ENCODE measurements at regions of chr6 and their contacts with region 1.

Region 1: DNA sequence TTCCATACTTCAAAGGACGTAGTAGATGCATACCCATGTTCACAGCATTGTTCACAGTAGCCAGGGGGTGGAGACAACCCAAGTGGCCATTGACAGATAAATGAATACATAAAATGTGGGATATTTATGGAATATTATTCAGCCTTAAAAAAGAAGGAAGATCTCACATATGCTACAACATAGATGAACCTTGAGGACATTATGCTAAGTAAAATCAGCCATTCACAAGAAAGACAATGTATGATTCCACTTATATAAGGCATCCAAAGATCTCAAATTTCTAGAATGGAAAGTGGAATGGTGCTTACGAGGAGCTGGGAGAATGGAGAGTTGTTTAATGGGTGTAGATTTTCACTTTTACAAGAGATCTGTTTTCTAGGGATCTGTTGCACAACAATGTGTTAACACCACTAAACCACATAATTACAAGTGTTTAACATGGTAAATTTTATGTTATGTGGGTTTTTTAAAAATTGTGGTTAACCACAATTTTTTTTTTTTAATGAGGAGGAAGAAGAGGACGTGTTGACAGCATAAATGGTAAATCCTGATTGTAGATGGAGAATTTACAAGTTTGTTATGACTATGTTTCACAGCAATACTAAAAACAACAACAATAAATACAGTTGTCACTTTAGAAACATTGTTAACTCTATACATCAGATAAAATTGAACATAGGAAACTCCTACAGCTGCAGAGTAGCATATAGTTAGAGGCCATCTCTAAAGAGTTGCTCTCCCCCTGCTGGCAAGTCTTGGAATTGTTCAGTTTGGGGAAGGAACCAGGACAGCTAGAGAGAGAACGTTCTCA is 41.6 kb downstream of the CCN2 start:
- DNase-seq: peak; percentile 92
- H3K4me3 Mint-ChIP-seq: no peak overlapping the region
- H3K27ac Mint-ChIP-seq: no peak overlapping the region
- H3K4me1 Mint-ChIP-seq: peaks cover 6% of the 10 kb centered on the region
- H3K27me3 Mint-ChIP-seq: peaks cover 33% of the 10 kb centered on the region

Region 2: GRCh38 chr6:131694831-131695426 is 214.7 kb before region 1 on chr6:
- intact Hi-C with region 1: loop called (anchors 10 kb)
- DNase-seq: peak; percentile 74
- H3K4me3 Mint-ChIP-seq: no peak overlapping the region
- H3K27ac Mint-ChIP-seq: no peak overlapping the region
- H3K4me1 Mint-ChIP-seq: no peaks in the 10 kb centered on the region
- H3K27me3 Mint-ChIP-seq: peaks cover 3% of the 10 kb centered on the region

Region 3: DNA sequence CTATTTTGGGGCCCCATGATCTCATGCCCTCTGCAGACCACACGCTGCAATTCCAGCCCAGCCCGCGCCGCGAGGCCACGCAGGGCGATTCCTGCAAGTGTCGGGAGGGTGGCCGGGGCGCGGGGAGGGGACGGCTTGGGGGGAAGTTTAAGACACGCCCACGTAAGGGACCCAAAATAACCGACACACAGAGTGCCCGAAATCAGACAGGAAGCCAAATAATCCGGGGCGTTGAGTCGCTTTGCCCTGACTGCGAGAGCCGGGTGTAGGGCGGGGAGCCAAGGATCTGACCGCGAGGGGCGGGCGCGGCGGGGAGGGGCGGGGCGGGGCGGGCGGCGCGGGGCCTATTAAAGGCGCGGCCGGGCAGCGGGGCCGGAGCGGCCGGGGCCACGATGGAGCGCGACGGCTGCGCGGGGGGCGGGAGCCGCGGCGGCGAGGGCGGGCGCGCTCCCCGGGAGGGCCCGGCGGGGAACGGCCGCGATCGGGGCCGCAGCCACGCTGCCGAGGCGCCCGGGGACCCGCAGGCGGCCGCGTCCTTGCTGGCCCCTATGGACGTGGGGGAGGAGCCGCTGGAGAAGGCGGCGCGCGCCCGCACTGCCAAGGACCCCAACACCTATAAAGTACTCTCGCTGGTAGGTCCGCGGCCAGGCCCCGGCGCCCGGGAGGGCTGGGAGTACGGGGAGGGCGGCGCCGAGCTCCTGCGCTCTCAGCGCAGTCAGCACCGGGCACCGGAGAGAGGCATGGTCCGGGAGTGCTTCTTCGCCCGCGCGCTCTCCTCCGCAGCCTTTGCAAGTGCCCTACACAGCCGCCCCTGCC is 101.8 kb before region 1 on chr6 and contains the start of gene ENPP1:
- intact Hi-C with region 1: loop called (anchors 10 kb)
- DNase-seq: peak; percentile 77
- H3K4me3 Mint-ChIP-seq: peak within 1 kb of the TSS; percentile 90
- H3K27ac Mint-ChIP-seq: peak within 1 kb of the TSS; percentile 41
- H3K4me1 Mint-ChIP-seq: peaks cover 13% of the 10 kb centered on the region
- H3K27me3 Mint-ChIP-seq: peaks cover 66% of the 10 kb centered on the region
- total RNA-seq, gene ENPP1: 0.58 and 0.66 TPM in 2 replicates

Region 4: DNA sequence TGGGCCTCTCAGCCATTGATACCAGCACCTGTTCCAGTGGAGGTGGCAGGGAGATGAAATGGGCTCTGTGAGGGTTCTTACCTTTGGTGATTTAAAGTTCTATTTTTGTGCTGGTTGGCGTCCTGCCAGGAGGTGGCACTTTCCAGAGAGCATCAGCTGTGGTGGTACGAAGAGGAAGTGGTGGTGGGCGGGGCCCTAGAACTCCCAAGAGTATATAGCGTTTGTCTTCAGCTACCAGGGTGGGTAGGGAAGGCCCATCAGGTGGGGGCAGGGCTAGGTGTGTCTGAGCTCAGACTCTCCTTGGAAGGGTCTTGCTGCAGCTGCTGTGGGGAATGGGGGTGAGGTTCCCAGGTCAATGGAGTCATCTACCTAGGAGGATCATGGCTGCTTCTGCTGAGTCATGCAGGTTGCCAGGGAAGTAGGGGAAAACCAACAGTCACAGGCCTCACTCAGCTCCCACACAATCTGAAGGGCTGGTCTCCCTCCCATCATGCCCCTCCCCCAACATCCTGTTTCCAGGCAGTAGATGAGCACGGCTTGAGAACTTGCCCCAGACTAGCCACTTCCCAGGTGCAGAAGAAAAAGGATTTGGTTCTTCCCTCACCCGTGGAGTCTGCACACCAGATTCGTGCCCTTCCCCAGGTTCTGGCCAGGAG is 445.0 kb after region 1 on chr6:
- intact Hi-C with region 1: no loop called
- DNase-seq: peak; percentile 73
- H3K4me3 Mint-ChIP-seq: peak overlapping the region; percentile 22
- H3K27ac Mint-ChIP-seq: peak overlapping the region; percentile 74
- H3K4me1 Mint-ChIP-seq: peaks cover 35% of the 10 kb centered on the region
- H3K27me3 Mint-ChIP-seq: peaks cover 6% of the 10 kb centered on the region